Caco-2 (cell line): ENCODE measurements at regions of chr19 and their contacts with region 1.

Region 1: GRCh38 chr19:6384381-6384780 is 8.6 kb downstream of the GTF2F1 start:
- DNase-seq: no peak
- H3K4me3 ChIP-seq: no peak overlapping the region
- H3K4me3 Mint-ChIP-seq: no peak overlapping the region
- H3K27ac Mint-ChIP-seq: no peak overlapping the region
- H3K4me1 ChIP-seq: no peaks in the 10 kb centered on the region
- H3K4me1 Mint-ChIP-seq: no peaks in the 10 kb centered on the region
- H3K27me3 ChIP-seq: no peaks in the 10 kb centered on the region
- H3K27me3 Mint-ChIP-seq: no peaks in the 10 kb centered on the region
- CTCF ChIP-seq: no peak

Region 2: DNA sequence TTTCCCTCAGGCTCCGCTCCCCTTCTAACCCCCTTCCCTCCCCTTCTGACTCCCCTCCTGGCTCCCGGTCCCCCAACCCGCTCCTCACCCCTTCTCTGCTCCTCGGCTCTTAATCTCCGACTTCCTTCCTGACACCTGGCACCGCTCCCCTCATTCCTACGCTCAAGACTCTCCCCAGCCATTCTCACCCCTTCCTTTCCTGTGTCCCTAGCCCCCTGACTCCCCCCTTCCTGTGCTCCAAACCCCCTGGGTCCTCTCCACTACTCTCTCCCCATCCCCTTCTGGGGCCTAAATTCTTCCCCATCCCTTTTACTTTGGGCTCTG is 22.4 kb before region 1 on chr19:
- CTCF ChIA-PET with region 1: no interaction called
- POLR2A ChIA-PET with region 1: interaction called, 14 read pairs
- intact Hi-C with region 1: no loop called
- DNase-seq: no peak
- H3K4me3 ChIP-seq: peak overlapping the region; percentile 92
- H3K4me3 Mint-ChIP-seq: peak overlapping the region; percentile 79
- H3K27ac Mint-ChIP-seq: peak overlapping the region; percentile 64
- H3K4me1 ChIP-seq: no peaks in the 10 kb centered on the region
- H3K4me1 Mint-ChIP-seq: no peaks in the 10 kb centered on the region
- H3K27me3 ChIP-seq: no peaks in the 10 kb centered on the region
- H3K27me3 Mint-ChIP-seq: no peaks in the 10 kb centered on the region
- CTCF ChIP-seq: no peak